A549 (cell line): ENCODE measurements at regions of chr19 and their contacts with region 1.

Region 1: DNA sequence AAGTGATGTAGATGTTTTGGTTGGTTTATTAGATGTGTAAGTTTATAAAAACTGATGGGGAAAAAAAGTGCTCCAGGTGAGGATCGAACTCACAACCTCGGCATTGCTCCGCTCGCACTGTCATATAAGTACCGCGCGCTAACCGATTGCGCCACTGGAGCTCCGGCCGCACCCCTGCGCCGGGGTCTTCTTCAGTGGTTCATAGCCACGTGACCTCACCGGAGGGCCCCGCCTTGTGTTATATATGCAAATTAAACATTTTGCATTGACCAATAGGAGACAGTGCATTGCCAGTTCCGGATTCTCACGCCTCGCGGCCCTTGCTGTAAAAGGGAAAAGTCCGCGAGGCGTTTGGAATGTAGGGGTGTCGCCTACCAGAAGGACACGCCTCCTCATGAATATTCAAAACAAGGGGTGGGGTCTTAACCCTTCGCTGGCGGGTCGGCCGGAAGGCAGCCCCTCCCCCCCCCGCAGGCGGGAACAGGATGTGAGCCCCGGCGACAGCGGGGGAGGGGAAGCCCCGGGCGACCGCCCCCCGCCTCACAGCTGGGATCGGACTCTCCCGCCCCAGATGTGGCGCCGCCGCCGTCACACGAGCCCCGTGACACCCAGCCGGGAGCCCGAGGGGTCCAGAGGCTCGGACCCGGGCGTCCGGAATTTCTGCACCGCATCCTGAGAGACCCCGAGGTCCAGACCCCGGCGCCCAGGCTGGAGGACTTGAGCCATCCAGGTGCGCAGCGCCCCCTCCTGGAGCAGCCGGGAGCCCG is at the start of gene PLEKHG2:
- DNase-seq: peak; percentile 100
- ATAC-seq: peak; percentile 40 to 66
- H3K4me3 ChIP-seq: peak within 1 kb of the TSS; percentile 76
- H3K27ac ChIP-seq: peak within 1 kb of the TSS; percentile 94 to 99
- H3K4me1 ChIP-seq: peaks cover 43% of the 10 kb centered on the region
- CTCF ChIP-seq: peak; percentile 99
- EP300 ChIP-seq: peak in 1 of 2 experiments; percentile 61; a peak in 1 of 5 replicates
- POLR2A ChIP-seq: peak; percentile 64
- RAD21 ChIP-seq: peak; percentile 55 to 82
- polyA plus RNA-seq, gene PLEKHG2: 21.6 and 35.1 TPM in 2 replicates

Region 2: GRCh38 chr19:39138221-39139211 is 273.8 kb before region 1 on chr19:
- CTCF ChIA-PET with region 1: no interaction called
- POLR2A ChIA-PET with region 1: no interaction called
- DNase-seq: no peak
- ATAC-seq: no peak
- H3K4me3 ChIP-seq: no peak overlapping the region
- H3K27ac ChIP-seq: peak overlapping the region in 1 of 2 experiments; percentile 64; a peak in 3 of 6 replicates
- H3K4me1 ChIP-seq: peaks cover 52% of the 10 kb centered on the region
- CTCF ChIP-seq: no peak
- EP300 ChIP-seq: no peak
- POLR2A ChIP-seq: no peak
- RAD21 ChIP-seq: no peak

Region 3: DNA sequence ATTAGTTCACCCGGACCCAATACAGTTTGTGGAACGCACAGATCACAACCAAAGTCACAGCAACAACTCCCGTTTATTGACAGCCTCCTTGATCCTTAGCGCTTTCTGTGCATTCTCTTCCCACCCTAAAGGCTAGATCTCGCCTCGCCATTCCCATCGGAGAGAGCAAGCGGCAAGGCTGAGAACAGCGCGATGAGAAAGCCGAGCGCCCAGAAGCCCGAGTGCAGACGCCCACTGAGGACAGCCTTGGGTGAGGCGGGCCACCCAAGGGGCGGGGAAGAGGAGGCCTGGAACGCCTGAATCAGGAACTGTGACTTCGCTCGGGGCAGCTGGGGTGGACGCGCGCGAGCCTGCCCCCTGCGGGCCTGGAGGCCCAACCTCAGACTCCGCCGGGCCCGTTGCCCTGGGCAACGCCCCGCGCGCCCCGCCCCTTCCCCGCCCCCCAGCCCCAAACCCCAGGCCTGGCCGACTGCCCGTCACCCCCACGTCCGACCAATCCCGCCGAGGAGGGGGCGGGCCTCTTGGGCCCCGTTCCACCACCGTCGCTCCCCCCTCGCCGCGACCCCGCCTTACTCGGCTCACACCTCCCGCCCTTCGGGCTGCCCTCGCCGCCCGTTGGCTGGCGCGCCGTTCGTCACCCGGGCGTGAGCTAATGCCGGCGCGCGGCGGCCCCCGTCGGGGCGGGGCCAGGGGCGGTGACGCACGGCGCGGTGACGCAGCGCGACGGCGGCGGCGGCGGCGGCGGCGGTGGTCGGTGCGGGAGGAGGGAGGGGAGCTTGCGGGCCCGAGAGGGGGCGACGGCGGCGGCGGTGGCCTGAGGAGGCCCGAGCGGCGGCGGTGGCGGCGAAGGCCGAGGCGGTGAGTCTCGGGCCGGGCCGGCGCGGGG is 70.3 kb before region 1 on chr19 and contains the start of gene SAMD4B:
- CTCF ChIA-PET with region 1: interaction called, 20 read pairs
- POLR2A ChIA-PET with region 1: interaction called, 10 read pairs
- DNase-seq: peak; percentile 99 to 100
- ATAC-seq: peak; percentile 90 to 97
- H3K4me3 ChIP-seq: peak within 1 kb of the TSS; percentile 90
- H3K27ac ChIP-seq: peak within 1 kb of the TSS; percentile 85 to 94
- H3K4me1 ChIP-seq: peaks cover 22% of the 10 kb centered on the region
- CTCF ChIP-seq: peak; percentile 96
- EP300 ChIP-seq: peak in 1 of 2 experiments; percentile 9; a peak in 1 of 5 replicates
- POLR2A ChIP-seq: peak; percentile 97
- RAD21 ChIP-seq: peak; percentile 31 to 60; a peak in 4 of 5 replicates
- polyA plus RNA-seq, gene SAMD4B: 82.1 and 101 TPM in 2 replicates

Region 4: DNA sequence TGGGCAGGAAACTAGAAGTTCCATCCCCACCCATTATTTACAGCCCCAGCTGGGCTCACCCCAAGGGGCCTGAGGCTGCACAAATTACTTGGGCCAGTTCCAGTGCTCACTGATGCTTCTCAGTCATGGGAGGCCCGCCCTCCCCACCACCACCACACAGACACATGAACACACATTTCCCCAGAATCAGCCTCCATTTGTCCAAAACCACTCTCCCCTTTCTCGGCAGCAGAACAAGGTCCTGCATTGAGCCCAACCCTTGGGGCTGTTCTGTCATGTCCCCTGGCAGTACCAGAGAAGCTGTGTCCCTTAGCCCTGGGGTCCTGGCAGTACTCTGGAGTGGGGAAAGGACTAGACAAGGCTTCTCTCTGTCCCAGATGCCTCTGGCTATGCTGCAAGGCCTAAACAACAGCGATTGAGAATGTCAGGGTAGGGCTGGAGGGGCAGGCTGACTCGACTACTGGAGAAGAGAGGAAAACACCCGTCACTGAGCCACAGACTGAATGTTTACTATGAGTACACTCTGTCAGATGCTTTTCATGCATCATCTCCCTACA is 48.3 kb before region 1 on chr19:
- CTCF ChIA-PET with region 1: interaction called, 13 read pairs
- POLR2A ChIA-PET with region 1: interaction called, 9 read pairs
- DNase-seq: no peak
- ATAC-seq: no peak; a peak in 2 of 6 replicates
- H3K4me3 ChIP-seq: no peak overlapping the region
- H3K27ac ChIP-seq: no peak overlapping the region
- H3K4me1 ChIP-seq: no peaks in the 10 kb centered on the region
- CTCF ChIP-seq: no peak
- EP300 ChIP-seq: no peak
- POLR2A ChIP-seq: no peak
- RAD21 ChIP-seq: no peak

Region 5: DNA sequence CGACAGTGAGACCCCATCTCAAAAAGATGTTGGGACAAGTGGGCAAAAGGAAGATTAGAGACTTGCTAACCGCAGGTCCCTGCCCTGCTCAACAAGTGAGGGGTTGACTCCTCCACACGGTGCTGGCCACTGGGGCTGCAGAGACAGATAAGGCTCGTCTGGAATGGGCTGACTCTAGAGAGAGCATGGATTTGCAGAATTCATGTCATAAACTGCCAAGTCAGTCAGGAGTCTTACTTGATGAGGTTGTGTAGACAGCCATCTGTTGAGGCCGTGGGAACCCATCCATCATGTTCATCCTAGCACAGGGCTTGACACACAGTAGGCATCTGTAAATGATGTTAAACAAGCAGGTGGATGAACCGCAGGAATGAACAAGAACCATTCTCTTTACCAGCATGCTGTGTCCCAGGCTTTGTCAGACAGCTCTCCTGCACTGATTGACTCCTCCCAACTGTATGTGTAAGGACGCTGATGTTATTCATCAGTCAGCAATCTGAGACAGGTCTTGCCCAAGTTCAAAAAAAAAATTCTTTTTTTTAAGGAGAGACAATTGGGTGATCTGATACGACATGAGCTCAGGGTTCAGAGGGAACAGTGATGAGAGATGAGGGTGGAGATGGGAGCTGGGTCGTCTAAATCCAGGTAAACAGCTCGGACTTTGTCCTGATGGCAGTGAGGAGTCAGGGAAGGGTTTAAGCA is 30.2 kb before region 1 on chr19:
- CTCF ChIA-PET with region 1: interaction called, 27 read pairs
- POLR2A ChIA-PET with region 1: interaction called, 3 read pairs
- DNase-seq: no peak
- ATAC-seq: peak; percentile 28 to 35; a peak in 4 of 6 replicates
- H3K4me3 ChIP-seq: no peak overlapping the region
- H3K27ac ChIP-seq: no peak overlapping the region
- H3K4me1 ChIP-seq: no peaks in the 10 kb centered on the region
- CTCF ChIP-seq: no peak
- EP300 ChIP-seq: no peak
- POLR2A ChIP-seq: no peak
- RAD21 ChIP-seq: no peak

Region 6: DNA sequence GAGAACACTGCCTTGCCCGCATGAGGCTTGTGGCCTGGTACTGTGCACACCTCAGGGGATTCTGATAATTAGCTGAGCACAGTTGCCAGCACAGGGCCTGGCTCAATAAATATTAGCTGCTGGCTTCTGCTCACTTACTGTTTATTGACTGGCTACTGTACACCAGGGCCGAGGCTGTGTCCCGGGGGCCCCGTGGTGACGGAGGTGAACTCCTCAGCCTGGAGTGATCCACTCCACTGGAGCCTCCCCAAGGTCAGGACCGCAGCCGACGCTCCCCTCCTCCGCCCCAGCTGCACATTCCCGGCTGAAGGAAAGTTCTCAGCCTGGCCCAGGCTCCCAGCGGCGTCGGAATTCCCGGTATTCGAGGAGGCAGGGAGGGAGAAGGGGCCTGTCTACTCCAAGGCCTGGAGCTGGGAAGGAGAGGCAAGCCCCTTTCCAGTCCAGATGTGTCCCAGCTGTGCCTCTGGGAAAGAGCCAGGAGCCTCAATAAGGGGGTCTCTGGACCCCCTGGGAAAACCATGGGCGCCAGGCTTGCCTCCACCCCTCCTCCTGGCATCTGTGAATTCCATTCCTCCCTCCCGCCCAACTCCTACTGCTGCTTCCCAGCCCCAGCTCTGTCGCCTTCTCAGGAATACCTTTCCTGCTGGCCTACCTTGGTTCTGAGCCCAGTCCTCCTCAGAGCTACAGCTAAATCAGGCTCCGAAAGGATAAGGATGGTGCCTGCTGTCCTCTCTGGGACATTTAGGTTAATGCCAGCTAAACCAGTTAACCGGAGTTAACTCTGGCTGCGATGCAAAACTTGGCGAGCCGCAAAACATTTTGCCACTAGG is 16.2 kb after region 1 on chr19:
- CTCF ChIA-PET with region 1: interaction called, 457 read pairs
- POLR2A ChIA-PET with region 1: interaction called, 140 read pairs
- DNase-seq: peak; percentile 81 to 94
- ATAC-seq: peak; percentile 52 to 69
- H3K4me3 ChIP-seq: no peak overlapping the region
- H3K27ac ChIP-seq: peak overlapping the region; percentile 83 to 90
- H3K4me1 ChIP-seq: peaks cover 62% of the 10 kb centered on the region
- CTCF ChIP-seq: no peak
- EP300 ChIP-seq: no peak
- POLR2A ChIP-seq: no peak
- RAD21 ChIP-seq: no peak